ENCODE measurements at regions of chr9 and their contacts with region 1.

Region 1: DNA sequence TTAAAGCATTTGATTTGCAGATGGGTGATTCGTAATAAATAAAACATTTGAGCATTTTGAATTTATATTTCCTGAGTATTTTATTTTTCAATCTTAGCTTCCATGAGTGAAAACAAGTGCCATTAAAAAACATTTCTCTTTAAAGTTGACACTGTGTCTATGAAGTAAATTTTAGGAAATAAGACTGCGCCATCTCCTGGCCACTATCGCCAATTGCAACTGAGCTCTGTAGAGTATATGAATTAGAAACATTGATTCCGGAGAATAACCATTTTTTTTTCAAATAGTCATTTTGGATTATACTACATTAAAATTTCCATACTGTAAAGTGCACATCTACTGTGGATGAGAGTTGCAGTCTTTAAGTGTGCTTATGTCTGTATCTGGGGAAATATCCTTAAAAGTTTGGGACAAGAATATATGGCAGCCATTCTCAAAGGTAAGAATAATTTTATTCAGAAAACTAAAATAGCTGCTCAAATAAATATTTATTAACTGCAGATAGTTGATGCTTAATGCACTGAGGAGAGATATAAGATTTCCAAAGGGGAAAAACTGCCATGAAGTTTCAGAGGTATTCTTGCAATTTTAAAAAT is 5.9 kb downstream of the DMRTA1 start:
- DNase-seq: peak; percentile 17
- ATAC-seq: peak; percentile 45; the same call in 1 of the 3 replicates
- H3K4me3 ChIP-seq: no peak overlapping the region
- H3K27ac ChIP-seq: no peak overlapping the region
- H3K4me1 ChIP-seq: no peaks in the 10 kb centered on the region
- H3K27me3 ChIP-seq: peaks cover 1 to 11% of the 10 kb centered on the region in 2 experiments; a peak in 3 of 5 replicates
- CTCF ChIP-seq: peak; percentile 49
- EP300 ChIP-seq: no peak
- POLR2A ChIP-seq: no peak
- RAD21 ChIP-seq: no peak

Region 2: GRCh38 chr9:22244141-22245011 is 208.1 kb before region 1 on chr9:
- CTCF ChIA-PET with region 1: interaction called, 5 read pairs
- POLR2A ChIA-PET with region 1: no interaction called
- in situ Hi-C with region 1: loop called (anchors 5 kb)
- intact Hi-C with region 1: loop called (anchors 1 kb)
- DNase-seq: peak; percentile 26
- ATAC-seq: peak; percentile 82
- H3K4me3 ChIP-seq: no peak overlapping the region
- H3K27ac ChIP-seq: no peak overlapping the region
- H3K4me1 ChIP-seq: no peaks in the 10 kb centered on the region
- H3K27me3 ChIP-seq: no peaks in the 10 kb centered on the region
- CTCF ChIP-seq: peak; percentile 57
- EP300 ChIP-seq: no peak
- POLR2A ChIP-seq: no peak
- RAD21 ChIP-seq: no peak

Region 3: GRCh38 chr9:22307013-22307711 is 145.4 kb before region 1 on chr9:
- CTCF ChIA-PET with region 1: interaction called, 11 read pairs
- POLR2A ChIA-PET with region 1: no interaction called
- in situ Hi-C with region 1: loop called (anchors 5 kb)
- intact Hi-C with region 1: loop called (anchors 1 kb)
- DNase-seq: peak; percentile 43
- ATAC-seq: no peak
- H3K4me3 ChIP-seq: no peak overlapping the region
- H3K27ac ChIP-seq: no peak overlapping the region
- H3K4me1 ChIP-seq: no peaks in the 10 kb centered on the region
- H3K27me3 ChIP-seq: no peaks in the 10 kb centered on the region
- CTCF ChIP-seq: peak; percentile 52
- EP300 ChIP-seq: no peak
- POLR2A ChIP-seq: no peak
- RAD21 ChIP-seq: no peak

Measured in HepG2 (cell line).